Cardiac septum (tissue), 1 donor: ENCODE measurements at regions of chr5 and their contacts with region 1.

Region 1: GRCh38 chr5:179821581-179822432 is 1.1 kb downstream of the SQSTM1 start:
- DNase-seq: peak; percentile 98

Region 2: GRCh38 chr5:179806250-179807222 is 15.3 kb before region 1 on chr5 and contains the start of gene MGAT4B:
- intact Hi-C with region 1: loop called (anchors 1 kb)
- DNase-seq: peak; percentile 90
- total RNA-seq, gene MGAT4B: 160 TPM

Region 3: DNA sequence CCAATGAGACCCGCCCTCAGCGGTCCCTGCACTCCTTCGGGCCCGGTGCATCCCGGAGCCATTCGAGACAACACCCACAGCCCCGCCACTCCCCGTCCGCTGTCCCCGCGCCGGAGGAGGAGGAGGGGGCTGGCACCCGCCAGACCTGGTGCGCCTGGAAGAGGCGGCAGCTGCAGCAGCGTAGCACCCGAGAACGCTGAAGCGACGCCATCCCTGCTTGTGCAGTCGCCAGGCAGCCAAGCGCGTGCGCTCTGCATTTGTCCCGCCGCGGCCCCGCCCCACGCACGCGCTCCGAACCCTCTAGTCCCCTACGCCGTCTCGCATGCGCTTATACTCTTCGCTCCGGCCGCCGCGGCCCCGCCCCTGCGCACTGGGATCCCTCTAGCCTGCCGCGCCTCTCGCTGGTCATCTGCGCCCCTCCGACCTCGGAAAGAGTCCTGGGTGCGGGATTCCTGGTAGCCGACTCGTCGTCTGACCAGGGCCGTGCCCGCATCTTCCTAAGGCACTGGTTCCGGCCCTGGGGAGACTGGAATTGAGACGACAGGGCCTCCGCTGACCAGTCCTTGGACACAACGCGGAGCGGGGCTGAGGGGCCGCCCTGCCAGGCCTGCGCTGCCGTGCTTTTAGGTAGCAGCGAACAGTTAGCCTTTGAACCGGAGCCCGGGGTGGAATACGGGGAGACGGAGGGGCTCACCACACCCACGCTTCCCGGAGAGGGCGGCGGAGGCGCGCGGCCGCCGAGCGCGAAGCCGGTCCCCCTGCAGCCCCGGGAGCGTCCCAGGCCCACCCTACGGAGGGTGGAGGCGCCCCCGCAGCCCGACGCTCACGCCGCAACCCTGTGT is 37.0 kb after region 1 on chr5 and contains the start of gene MRNIP:
- intact Hi-C with region 1: loop called (anchors 2 kb)
- DNase-seq: peak; percentile 99
- total RNA-seq, gene MRNIP: 15.3 TPM